Colonic mucosa (tissue), 4 donors: ENCODE measurements at regions of chr17 and their contacts with region 1.

Region 1: GRCh38 chr17:4004517-4005295 is 40.5 kb upstream of the ATP2A3 start:
- DNase-seq: peak; percentile 76
- H3K4me3 ChIP-seq: no peak overlapping the region
- H3K27ac ChIP-seq: peak overlapping the region; percentile 77
- H3K4me1 ChIP-seq: peaks cover 4% of the 10 kb centered on the region
- H3K27me3 ChIP-seq: no peaks in the 10 kb centered on the region
- CTCF ChIP-seq: peak; percentile 98

Region 2: GRCh38 chr17:3859940-3860339 is 144.8 kb before region 1 on chr17:
- intact Hi-C with region 1: loop called (anchors 5 kb)
- DNase-seq: no peak
- H3K4me3 ChIP-seq: no peak overlapping the region
- H3K27ac ChIP-seq: no peak overlapping the region
- H3K4me1 ChIP-seq: no peaks in the 10 kb centered on the region
- H3K27me3 ChIP-seq: no peaks in the 10 kb centered on the region
- CTCF ChIP-seq: no peak

Region 3: GRCh38 chr17:3935140-3935542 is 69.6 kb before region 1 on chr17:
- intact Hi-C with region 1: loop called (anchors 5 kb)
- DNase-seq: peak; percentile 79
- H3K4me3 ChIP-seq: no peak overlapping the region
- H3K27ac ChIP-seq: no peak overlapping the region
- H3K4me1 ChIP-seq: no peaks in the 10 kb centered on the region
- H3K27me3 ChIP-seq: no peaks in the 10 kb centered on the region
- CTCF ChIP-seq: peak; percentile 62

Region 4: GRCh38 chr17:3966720-3967363 is 37.9 kb before region 1 on chr17:
- intact Hi-C with region 1: loop called (anchors 2 kb)
- DNase-seq: peak; percentile 91
- H3K4me3 ChIP-seq: no peak overlapping the region
- H3K27ac ChIP-seq: peak overlapping the region; percentile 97
- H3K4me1 ChIP-seq: peaks cover 28% of the 10 kb centered on the region
- H3K27me3 ChIP-seq: no peaks in the 10 kb centered on the region
- CTCF ChIP-seq: peak; percentile 43

Region 5: DNA sequence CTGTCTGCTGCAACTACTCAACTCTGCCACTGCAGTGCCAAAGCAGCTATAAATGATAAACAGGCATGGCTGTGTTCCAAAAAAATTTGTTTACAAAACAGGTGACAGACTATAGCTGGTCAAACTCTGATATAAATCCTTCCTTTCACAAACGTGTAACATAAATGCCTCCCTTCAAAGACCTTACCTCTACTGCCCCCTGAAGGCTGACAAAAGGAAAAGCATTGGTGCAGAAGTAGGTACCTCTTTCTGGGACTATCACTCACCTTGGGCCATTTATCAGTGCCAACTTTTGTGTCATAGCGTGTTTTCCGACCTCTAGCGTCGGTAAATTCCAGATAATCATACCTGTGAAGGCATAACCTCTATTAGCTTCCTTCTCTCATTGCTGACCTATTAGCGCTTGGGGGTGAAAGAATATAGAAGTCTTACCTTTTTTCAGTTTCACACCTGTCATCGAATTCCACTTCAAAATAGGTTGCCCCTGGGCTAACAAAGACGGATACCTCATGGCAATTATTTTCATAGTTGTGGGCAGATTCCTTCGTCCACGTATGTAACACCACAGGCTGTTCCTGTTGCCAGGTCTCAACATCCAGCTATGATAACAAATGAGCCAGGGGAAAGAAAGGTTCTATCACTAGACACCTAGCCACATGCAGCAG is 70.3 kb after region 1 on chr17:
- intact Hi-C with region 1: no loop called
- DNase-seq: no peak
- H3K4me3 ChIP-seq: no peak overlapping the region
- H3K27ac ChIP-seq: no peak overlapping the region
- H3K4me1 ChIP-seq: no peaks in the 10 kb centered on the region
- H3K27me3 ChIP-seq: no peaks in the 10 kb centered on the region
- CTCF ChIP-seq: peak; percentile 55